ENCODE measurements at regions of chr5 and their contacts with region 1.

Region 1: DNA sequence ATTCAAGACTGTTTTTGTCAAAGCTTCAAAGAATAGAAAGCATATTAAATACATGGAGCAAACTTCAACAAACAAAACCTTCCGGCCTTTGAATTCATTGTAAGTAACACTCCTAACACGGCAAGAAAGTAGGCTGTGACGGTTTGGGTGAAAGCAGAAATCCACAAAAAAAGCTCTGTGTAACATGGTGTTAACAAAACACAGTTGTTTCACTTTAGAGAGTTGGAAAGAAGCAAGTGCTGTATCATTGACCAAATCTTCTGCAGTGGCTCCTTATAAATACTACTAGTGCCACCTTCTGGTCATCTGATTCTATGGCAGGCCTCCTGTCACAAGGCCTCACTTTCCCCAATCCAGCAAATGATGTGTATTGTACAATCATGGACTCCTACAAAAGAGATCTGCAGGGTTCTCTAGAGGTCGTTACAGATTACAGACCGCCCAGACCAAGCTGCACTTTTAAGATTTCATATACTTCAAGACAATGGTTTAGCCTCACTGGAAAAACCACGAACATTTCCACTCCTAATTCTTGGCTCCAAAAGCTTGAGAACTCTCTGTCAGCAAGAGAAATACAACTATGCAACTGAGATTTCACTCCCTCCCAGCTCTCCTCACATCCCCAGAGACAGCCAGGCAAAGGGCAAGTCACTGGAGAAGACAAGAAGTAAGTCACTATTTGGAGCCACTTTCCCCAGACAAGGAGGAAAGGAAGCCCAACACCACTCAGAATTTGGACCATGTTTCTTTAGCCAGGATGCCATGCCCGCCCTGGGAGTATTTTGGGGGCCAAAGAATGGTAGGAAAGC is 196.2 kb downstream of the DTWD2 start:
- DNase-seq: peak; percentile 18 to 66
- ATAC-seq: peak; percentile 88 to 97
- H3K4me3 ChIP-seq: no peak overlapping the region
- H3K27ac ChIP-seq: no peak overlapping the region
- H3K4me1 ChIP-seq: no peaks in the 10 kb centered on the region
- CTCF ChIP-seq: peak; percentile 71
- EP300 ChIP-seq: no peak
- POLR2A ChIP-seq: no peak
- RAD21 ChIP-seq: peak; percentile 75 to 81

Region 2: GRCh38 chr5:118778941-118779340 is 13.2 kb before region 1 on chr5:
- CTCF ChIA-PET with region 1: interaction called, 13 read pairs
- POLR2A ChIA-PET with region 1: no interaction called
- DNase-seq: no peak
- ATAC-seq: no peak
- H3K4me3 ChIP-seq: no peak overlapping the region
- H3K27ac ChIP-seq: no peak overlapping the region
- H3K4me1 ChIP-seq: no peaks in the 10 kb centered on the region
- CTCF ChIP-seq: no peak
- EP300 ChIP-seq: no peak
- POLR2A ChIP-seq: no peak
- RAD21 ChIP-seq: no peak